Endothelial cell of umbilical vein (primary cell): ENCODE measurements at regions of chr20 and their contacts with region 1.

Region 1: DNA sequence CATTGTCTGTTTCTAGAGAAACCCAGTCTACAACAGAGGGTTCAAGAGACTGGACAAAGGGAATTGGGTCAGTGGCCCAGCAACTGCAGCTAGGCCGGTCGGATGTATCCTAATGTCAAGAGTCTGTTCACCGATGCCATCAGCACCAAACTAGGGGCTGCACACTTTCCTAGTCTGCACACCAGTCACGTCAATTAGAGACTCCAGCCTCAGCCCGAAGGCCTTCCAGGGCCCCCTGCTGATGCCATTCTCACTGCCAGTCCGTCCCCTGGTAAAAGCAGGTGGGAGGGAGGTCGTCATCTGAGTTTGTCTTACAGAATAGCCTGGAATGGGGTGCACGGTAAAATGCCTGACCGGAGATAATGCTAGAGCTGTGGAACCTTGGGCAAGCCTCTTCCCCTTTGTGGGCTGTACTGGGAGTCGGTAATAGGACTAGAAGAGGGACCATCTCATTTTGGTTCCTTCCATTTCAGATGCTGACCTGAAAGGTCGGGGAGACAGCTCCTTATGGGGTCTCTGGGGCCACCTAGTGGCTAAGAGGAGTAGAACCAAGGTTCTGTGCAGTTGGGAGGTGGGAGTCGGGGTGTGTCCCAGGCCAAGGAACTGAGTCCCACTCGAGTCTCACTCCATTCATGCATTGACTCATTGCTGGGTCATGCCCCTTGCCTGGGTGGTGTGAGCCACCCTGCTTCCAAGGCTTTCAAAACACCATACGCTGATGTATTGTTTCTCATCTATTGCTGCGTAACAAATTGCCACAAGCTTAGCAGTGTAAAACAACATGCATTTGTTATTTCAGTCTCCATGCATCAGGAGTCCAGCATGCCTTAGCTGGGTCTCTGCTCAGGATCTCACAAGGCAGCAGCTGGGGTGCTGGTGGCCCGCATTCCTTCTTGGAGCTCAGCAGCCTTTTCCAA is 5.1 kb downstream of the SOX12 start:
- DNase-seq: peak; percentile 65
- H3K4me3 ChIP-seq: no peak overlapping the region
- H3K27ac ChIP-seq: no peak overlapping the region
- H3K4me1 ChIP-seq: peaks cover 16% of the 10 kb centered on the region
- H3K27me3 ChIP-seq: no peaks in the 10 kb centered on the region
- CTCF ChIP-seq: peak; percentile 84 to 97
- POLR2A ChIP-seq: no peak

Region 2: DNA sequence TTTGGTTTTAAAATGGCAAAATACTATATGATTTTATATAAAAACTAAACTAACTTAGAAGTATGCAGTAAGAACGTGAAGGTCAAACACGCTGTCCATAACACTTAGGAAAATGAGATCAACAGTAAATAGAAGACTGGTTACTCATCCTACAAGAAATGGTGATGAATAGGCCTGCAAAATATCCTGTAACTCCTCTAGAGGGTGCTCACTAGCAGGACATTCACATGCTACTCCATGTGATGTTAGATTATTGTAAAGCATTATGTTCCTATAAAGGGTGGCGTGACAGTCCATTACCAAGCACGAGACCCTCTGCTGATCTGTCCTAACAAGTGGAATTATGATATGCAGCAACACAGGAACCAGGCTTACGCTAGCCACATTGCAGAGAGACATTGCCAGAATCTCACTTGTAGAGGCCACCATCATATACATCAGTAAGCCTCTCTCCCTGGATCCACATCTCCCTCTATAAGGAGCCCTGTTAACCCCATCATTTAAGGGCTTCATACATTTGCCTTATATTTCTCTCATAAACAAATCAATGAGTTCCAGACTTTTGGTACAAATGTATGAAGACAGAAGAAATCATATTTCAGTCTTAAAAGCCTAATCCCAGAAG is 121.4 kb before region 1 on chr20:
- CTCF ChIA-PET with region 1: interaction called, 19 read pairs
- POLR2A ChIA-PET with region 1: no interaction called
- dilution Hi-C with region 1: no loop called
- intact Hi-C with region 1: loop called (anchors 1 kb)
- DNase-seq: peak; percentile 66
- H3K4me3 ChIP-seq: no peak overlapping the region
- H3K27ac ChIP-seq: no peak overlapping the region
- H3K4me1 ChIP-seq: no peaks in the 10 kb centered on the region
- H3K27me3 ChIP-seq: peaks cover 11 to 22% of the 10 kb centered on the region in 2 experiments
- CTCF ChIP-seq: peak; percentile 31 to 50
- POLR2A ChIP-seq: no peak

Region 3: GRCh38 chr20:266596-267562 is 63.6 kb before region 1 on chr20:
- CTCF ChIA-PET with region 1: interaction called, 66 read pairs
- POLR2A ChIA-PET with region 1: no interaction called
- dilution Hi-C with region 1: no loop called
- intact Hi-C with region 1: loop called (anchors 1 kb)
- DNase-seq: peak; percentile 76
- H3K4me3 ChIP-seq: peak overlapping the region in 2 of 3 experiments; percentile 31 to 50
- H3K27ac ChIP-seq: no peak overlapping the region
- H3K4me1 ChIP-seq: peaks cover 3% of the 10 kb centered on the region
- H3K27me3 ChIP-seq: peaks cover 0 to 2% of the 10 kb centered on the region in 2 experiments
- CTCF ChIP-seq: peak; percentile 97 to 98
- POLR2A ChIP-seq: peak; percentile 53

Region 4: GRCh38 chr20:297098-297924 is 33.2 kb before region 1 on chr20 and contains the start of gene ZCCHC3:
- CTCF ChIA-PET with region 1: interaction called, 42 read pairs
- POLR2A ChIA-PET with region 1: interaction called, 6 read pairs
- dilution Hi-C with region 1: no loop called
- intact Hi-C with region 1: loop called (anchors 1 kb)
- DNase-seq: peak; percentile 88
- H3K4me3 ChIP-seq: peak within 1 kb of the TSS; percentile 53 to 78 (median 63)
- H3K27ac ChIP-seq: peak within 1 kb of the TSS; percentile 83
- H3K4me1 ChIP-seq: peaks cover 33% of the 10 kb centered on the region
- H3K27me3 ChIP-seq: no peaks in the 10 kb centered on the region
- CTCF ChIP-seq: peak in 1 of 2 donors; percentile 17
- POLR2A ChIP-seq: peak; percentile 79
- total RNA-seq, gene ZCCHC3: 22.0 and 24.1 TPM in 2 replicates

Region 5: GRCh38 chr20:347640-348484 is 17.4 kb after region 1 on chr20:
- CTCF ChIA-PET with region 1: interaction called, 42 read pairs
- POLR2A ChIA-PET with region 1: interaction called, 4 read pairs
- dilution Hi-C with region 1: no loop called
- intact Hi-C with region 1: loop called (anchors 1 kb)
- DNase-seq: peak; percentile 89
- H3K4me3 ChIP-seq: peak overlapping the region; percentile 53 to 77 (median 54)
- H3K27ac ChIP-seq: peak overlapping the region; percentile 51
- H3K4me1 ChIP-seq: peaks cover 9% of the 10 kb centered on the region
- H3K27me3 ChIP-seq: no peaks in the 10 kb centered on the region
- CTCF ChIP-seq: no peak
- POLR2A ChIP-seq: peak; percentile 75

Region 6: GRCh38 chr20:362271-363254 is 32.1 kb after region 1 on chr20:
- CTCF ChIA-PET with region 1: no interaction called
- POLR2A ChIA-PET with region 1: no interaction called
- dilution Hi-C with region 1: no loop called
- intact Hi-C with region 1: no loop called
- DNase-seq: peak; percentile 89
- H3K4me3 ChIP-seq: no peak overlapping the region
- H3K27ac ChIP-seq: no peak overlapping the region
- H3K4me1 ChIP-seq: peaks cover 7% of the 10 kb centered on the region
- H3K27me3 ChIP-seq: no peaks in the 10 kb centered on the region
- CTCF ChIP-seq: peak in 1 of 2 donors; percentile 39
- POLR2A ChIP-seq: no peak

Region 7: DNA sequence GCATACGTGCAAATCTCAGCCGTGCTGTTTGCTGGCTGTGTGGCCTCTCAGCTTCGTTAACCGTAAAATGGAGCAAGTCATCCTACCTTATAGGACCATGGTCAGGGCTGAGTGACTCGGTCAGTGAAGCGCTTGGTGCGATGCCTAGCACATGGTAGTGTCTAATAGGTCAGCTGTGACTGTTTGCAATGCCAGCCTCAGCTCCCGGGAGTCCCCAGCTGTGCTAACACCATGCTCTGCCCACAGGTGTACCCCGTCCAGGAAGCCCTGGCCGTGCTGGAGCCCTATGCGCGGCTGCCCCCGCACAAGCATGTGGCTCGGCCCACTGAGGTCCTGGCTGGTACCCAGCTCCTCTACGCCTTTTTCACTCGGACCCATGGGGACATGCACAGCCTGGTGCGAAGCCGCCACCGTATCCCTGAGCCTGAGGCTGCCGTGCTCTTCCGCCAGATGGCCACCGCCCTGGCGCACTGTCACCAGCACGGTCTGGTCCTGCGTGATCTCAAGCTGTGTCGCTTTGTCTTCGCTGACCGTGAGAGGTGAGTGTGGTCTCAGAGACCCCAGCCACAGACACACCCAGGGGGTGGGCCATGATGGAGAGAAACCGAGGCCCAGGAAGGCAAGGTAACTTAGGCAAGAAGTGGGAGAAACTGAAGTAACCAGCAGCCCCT is 60.7 kb after region 1 on chr20:
- CTCF ChIA-PET with region 1: no interaction called
- POLR2A ChIA-PET with region 1: no interaction called
- dilution Hi-C with region 1: no loop called
- intact Hi-C with region 1: no loop called
- DNase-seq: no peak
- H3K4me3 ChIP-seq: no peak overlapping the region
- H3K27ac ChIP-seq: no peak overlapping the region
- H3K4me1 ChIP-seq: no peaks in the 10 kb centered on the region
- H3K27me3 ChIP-seq: no peaks in the 10 kb centered on the region
- CTCF ChIP-seq: no peak
- POLR2A ChIP-seq: no peak

Region 8: GRCh38 chr20:462199-462991 is 131.9 kb after region 1 on chr20 and contains the start of gene TBC1D20:
- CTCF ChIA-PET with region 1: no interaction called
- POLR2A ChIA-PET with region 1: no interaction called
- dilution Hi-C with region 1: no loop called
- intact Hi-C with region 1: no loop called
- DNase-seq: peak; percentile 85
- H3K4me3 ChIP-seq: peak within 1 kb of the TSS; percentile 55 to 70 (median 66)
- H3K27ac ChIP-seq: peak within 1 kb of the TSS; percentile 48
- H3K4me1 ChIP-seq: peaks cover 28% of the 10 kb centered on the region
- H3K27me3 ChIP-seq: no peaks in the 10 kb centered on the region
- CTCF ChIP-seq: peak in 1 of 2 donors; percentile 16
- POLR2A ChIP-seq: peak; percentile 75
- total RNA-seq, gene TBC1D20: 30.6 and 34.3 TPM in 2 replicates

Region 9: GRCh38 chr20:1907586-1907985 is 1577.1 kb after region 1 on chr20:
- CTCF ChIA-PET with region 1: no interaction called
- POLR2A ChIA-PET with region 1: no interaction called
- dilution Hi-C with region 1: no loop called
- intact Hi-C with region 1: no loop called
- DNase-seq: no peak
- H3K4me3 ChIP-seq: no peak overlapping the region
- H3K27ac ChIP-seq: no peak overlapping the region
- H3K4me1 ChIP-seq: no peaks in the 10 kb centered on the region
- H3K27me3 ChIP-seq: no peaks in the 10 kb centered on the region
- CTCF ChIP-seq: no peak
- POLR2A ChIP-seq: no peak